ENCODE measurements at regions of chr1 and their contacts with region 1.

Region 1: GRCh38 chr1:244835276-244836134 is at the start of gene COX20:
- DNase-seq: peak; percentile 90

Region 2: GRCh38 chr1:244614113-244614836 is 221.2 kb before region 1 on chr1:
- CTCF ChIA-PET with region 1: no interaction called
- POLR2A ChIA-PET with region 1: no interaction called
- DNase-seq: no peak

Region 3: DNA sequence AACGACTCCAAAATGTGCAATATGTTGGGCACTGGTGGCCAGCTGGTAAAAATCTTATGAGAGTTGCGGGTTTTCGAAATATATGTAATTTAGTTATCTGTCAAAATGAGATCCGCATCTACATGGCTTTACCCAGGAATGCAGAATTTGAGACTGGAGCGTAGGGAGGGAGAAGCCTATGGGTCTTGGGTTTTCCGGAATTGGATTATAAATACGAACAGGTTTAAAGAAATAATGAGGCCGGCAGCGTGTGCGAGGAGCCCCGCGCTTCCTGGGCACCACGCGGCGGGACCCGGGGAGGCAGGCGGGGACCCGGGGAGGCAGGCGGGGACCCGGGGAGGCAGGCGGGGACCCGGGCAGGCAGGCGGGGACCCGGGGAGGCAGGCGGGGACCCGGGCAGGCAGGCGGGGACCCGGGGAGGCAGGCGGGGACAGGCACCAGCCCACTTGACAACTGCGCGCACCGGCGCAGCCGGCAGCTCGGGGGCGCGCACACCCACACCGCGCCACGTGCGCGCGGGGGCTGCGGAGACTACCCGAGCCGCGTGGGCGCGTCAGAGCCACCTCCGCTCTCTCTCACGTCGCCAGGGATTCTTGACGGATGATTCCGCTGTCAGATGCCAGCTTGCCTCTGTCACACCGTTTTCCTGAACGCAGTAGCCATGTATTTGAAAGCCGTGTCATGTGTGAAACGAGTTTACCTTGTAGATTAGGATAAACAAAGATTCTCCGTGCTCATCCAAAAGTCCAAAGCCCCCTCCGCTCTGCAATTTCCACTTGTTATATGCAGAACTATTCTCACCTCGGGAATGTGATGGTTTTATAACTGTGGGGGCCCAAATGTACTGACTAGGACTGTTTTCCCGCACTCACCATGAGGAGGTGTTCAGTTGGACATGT is 83.2 kb after region 1 on chr1:
- CTCF ChIA-PET with region 1: no interaction called
- POLR2A ChIA-PET with region 1: interaction called, 10 read pairs
- DNase-seq: peak; percentile 68

Region 4: GRCh38 chr1:244970661-244971551 is 135.4 kb after region 1 on chr1:
- CTCF ChIA-PET with region 1: no interaction called
- POLR2A ChIA-PET with region 1: interaction called, 12 read pairs
- DNase-seq: peak; percentile 83